Activated T-helper 1 cell treated with anti-CD3 and anti-CD28 coated beads, Interleukin-12 subunit alpha, Interleukin-12 subunit beta, Interleukin-2, Interleukin-4 antibody, amounts not matched to agents 30 ng/mL and 10 ng/mL and 1 ng/mL, durations not matched to agents 14 hours and 24 hours and 36 hours (primary cell): ENCODE measurements at regions of chr2 and their contacts with region 1.

Region 1: GRCh38 chr2:3242747-3243369 is 134.8 kb downstream of the EIPR1 start:
- DNase-seq: peak; percentile 16
- H3K4me3 Mint-ChIP-seq: no peak overlapping the region
- H3K27ac Mint-ChIP-seq: no peak overlapping the region
- H3K4me1 Mint-ChIP-seq: peaks cover 25% of the 10 kb centered on the region
- H3K27me3 Mint-ChIP-seq: no peaks in the 10 kb centered on the region

Region 2: GRCh38 chr2:3223080-3223923 is 19.6 kb before region 1 on chr2:
- intact Hi-C with region 1: loop called (anchors 1 kb)
- DNase-seq: peak; percentile 75
- H3K4me3 Mint-ChIP-seq: peak overlapping the region; percentile 40
- H3K27ac Mint-ChIP-seq: peak overlapping the region; percentile 100
- H3K4me1 Mint-ChIP-seq: peaks cover 61% of the 10 kb centered on the region
- H3K27me3 Mint-ChIP-seq: no peaks in the 10 kb centered on the region

Region 3: GRCh38 chr2:3356799-3357198 is 113.9 kb after region 1 on chr2:
- intact Hi-C with region 1: no loop called
- DNase-seq: no peak
- H3K4me3 Mint-ChIP-seq: no peak overlapping the region
- H3K27ac Mint-ChIP-seq: no peak overlapping the region
- H3K4me1 Mint-ChIP-seq: peaks cover 17% of the 10 kb centered on the region
- H3K27me3 Mint-ChIP-seq: no peaks in the 10 kb centered on the region